ENCODE measurements at regions of chr6 and their contacts with region 1.

Region 1: GRCh38 chr6:108914235-108915022 is 66.2 kb downstream of the ARMC2 start:
- DNase-seq: no peak
- H3K4me3 ChIP-seq: no peak overlapping the region
- H3K27ac ChIP-seq: no peak overlapping the region
- H3K4me1 ChIP-seq: peaks cover 4% of the 10 kb centered on the region
- H3K27me3 ChIP-seq: no peaks in the 10 kb centered on the region
- CTCF ChIP-seq: no peak
- POLR2A ChIP-seq: no peak

Region 2: GRCh38 chr6:110329714-110330436 is 1415.4 kb after region 1 on chr6:
- intact Hi-C with region 1: loop called (anchors 5 kb)
- DNase-seq: no peak
- H3K4me3 ChIP-seq: peak overlapping the region; percentile 29 to 39
- H3K27ac ChIP-seq: peak overlapping the region; percentile 69
- H3K4me1 ChIP-seq: peaks cover 53% of the 10 kb centered on the region
- H3K27me3 ChIP-seq: no peaks in the 10 kb centered on the region
- CTCF ChIP-seq: no peak
- POLR2A ChIP-seq: no peak